ENCODE measurements at regions of chr1 and their contacts with region 1.

Region 1: DNA sequence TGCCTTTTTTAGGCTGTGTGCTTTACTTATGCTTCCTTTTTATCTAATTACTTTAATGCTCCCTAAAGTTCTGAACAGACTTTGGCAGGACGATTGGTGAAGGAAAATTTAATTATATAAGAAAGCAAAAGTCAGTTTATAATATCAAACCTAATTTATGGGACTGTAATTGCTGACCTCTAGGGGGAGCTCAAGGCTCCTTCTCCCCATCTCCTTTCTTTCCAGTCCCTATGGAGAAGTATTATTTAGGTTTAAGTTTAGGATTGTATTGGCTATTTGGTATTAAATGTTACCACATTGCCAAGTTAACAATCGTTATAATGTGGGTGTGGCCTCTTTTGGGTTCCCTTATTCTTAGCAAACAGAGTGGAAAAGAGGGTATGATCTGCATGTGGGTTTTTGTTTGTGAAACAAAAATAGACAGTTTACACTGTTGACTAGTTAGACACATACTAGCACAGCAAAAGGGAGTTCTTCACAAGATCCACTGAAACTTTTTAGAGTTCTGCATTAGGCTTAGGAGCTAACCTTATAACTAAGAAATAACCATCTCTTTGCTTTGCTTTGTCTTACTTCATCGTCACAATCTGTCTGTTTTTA is 48.2 kb upstream of the TNFSF4 start:
- DNase-seq: peak; percentile 26
- CTCF ChIP-seq: peak; percentile 64

Region 2: GRCh38 chr1:173149887-173150286 is 105.4 kb before region 1 on chr1:
- CTCF ChIA-PET with region 1: no interaction called
- POLR2A ChIA-PET with region 1: no interaction called
- DNase-seq: no peak
- CTCF ChIP-seq: no peak

Region 3: GRCh38 chr1:173267453-173267945 is 12.2 kb after region 1 on chr1:
- CTCF ChIA-PET with region 1: interaction called, 12 read pairs
- POLR2A ChIA-PET with region 1: no interaction called
- DNase-seq: no peak
- CTCF ChIP-seq: no peak

Region 4: DNA sequence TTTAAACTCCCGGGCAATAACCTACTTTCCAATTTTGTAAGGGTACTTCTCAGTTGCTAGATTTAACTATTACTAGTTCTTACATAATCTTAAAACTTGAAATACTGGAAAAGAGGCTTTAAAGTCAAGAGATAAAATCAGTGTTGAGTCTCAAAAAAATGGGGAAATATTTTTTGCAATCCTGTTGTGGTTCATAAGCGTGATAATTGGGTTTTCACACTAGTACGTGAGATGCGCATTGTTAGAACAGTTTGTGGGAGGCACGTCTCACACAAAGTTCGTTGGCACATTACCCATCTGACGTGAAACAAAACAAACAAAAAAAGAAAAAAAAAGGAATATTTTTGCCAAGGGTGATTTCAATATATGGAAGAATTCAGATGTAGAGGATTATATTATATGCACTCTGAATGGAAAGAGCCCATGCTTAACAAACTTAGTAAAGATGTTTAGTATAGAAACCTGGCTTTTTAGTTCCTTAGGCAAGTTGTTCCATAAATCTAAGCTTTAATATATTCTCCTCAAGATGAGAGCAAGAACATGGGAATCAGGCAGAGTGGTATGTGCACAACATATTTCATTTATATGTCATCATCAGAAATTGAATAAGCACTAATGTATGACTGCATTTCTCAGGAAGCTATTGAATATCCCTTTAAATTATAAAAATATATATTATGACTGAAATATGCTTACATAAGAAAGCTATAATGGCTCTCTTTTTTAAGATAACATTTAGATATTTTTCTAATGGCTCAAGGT is 25.8 kb after region 1 on chr1:
- CTCF ChIA-PET with region 1: interaction called, 18 read pairs
- POLR2A ChIA-PET with region 1: no interaction called
- DNase-seq: no peak
- CTCF ChIP-seq: no peak

Region 5: DNA sequence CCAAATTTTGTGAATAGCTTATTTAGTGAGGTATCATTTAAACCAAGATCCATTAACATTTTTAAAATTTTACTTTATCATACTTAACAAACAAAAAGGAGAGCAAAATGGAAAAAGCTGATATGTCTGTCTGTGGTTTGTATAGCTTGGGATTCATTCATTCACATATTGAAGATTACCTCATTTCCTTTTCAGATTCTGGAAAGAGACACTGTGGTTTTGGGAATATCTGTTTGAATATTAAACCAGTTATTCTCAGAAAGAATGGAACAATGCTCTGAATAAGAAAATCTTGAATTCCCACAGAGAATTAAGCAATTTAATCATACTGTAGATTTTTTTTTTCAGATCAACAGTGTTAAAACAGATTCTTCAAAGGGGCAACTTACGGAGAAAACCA is 128.0 kb after region 1 on chr1:
- CTCF ChIA-PET with region 1: no interaction called
- POLR2A ChIA-PET with region 1: no interaction called
- DNase-seq: no peak
- CTCF ChIP-seq: no peak

Region 6: DNA sequence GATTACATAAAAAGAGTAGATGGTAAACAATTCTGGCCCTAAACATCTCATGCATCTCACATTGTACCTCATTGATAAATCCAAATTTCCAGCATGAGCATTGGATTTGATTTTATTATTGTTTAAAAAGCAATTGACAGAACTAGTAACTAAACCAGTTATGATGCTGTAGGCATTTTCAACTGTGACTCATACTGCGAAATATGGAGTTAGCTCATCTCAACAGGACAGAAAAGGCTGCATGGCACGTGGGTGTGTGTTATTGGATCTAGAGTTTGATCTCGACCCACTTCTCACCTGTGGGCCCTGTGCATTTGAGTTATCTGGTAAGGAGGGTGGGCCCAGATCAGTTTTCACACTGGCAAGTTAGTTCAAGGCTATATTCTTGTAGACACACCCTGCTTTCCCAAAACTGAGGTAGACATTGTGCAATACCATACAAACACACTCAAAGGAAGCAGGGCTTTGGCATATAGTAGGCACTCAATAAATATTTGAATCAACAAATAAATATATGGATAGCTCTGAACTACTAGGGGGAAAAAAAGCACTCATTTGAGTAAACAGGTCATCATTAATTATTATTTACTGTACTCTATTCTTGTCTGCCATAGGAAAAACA is 150.5 kb after region 1 on chr1:
- CTCF ChIA-PET with region 1: interaction called, 12 read pairs
- POLR2A ChIA-PET with region 1: no interaction called
- DNase-seq: no peak
- CTCF ChIP-seq: no peak

Region 7: GRCh38 chr1:173489149-173489934 is 234.0 kb after region 1 on chr1:
- CTCF ChIA-PET with region 1: no interaction called
- POLR2A ChIA-PET with region 1: no interaction called
- DNase-seq: no peak
- CTCF ChIP-seq: no peak

Measured in GM10248 (cell line).